IMR-90 (cell line): ENCODE measurements at regions of chr10 and their contacts with region 1.

Region 1: DNA sequence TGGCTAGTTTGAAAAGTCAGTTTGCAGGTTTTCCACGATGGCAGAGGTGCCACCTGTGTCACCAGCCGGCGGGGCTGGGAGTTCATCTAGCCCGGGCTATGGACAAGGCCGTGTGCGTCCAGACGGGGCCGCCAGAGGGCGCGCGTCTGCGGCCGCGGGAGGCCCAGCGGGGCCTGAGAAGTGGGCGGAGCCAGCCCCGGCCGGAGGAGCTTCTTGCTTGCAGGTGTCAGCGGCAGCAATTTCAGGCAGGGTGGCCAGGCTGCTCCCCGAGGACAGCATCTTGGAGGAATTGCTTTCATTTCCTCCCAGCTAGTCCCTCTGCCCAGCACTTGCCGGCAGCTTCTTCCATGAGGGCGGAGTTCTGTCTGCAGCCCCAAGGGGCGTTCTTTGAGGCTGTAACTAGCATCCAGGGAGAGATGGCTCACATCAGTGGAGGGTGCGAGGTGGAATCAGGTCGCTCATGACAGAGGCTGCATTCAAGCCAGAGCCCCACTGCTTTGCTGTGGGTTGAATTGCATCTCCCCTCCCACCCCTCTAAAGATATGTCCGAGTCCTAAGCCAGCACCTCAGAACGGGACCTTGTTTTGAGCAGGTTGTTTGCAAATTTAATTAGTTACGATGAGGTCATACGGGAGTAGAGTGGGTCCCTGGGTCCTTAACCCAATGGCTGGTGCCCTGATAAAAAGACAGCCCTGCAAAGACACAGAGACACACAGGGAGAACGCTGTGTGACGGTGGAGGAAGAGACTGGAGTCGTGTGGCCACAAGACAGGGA is 85.9 kb upstream of the MKI67 start:
- DNase-seq: peak; percentile 41
- ATAC-seq: peak; percentile 95
- H3K4me3 ChIP-seq: no peak overlapping the region
- H3K27ac ChIP-seq: no peak overlapping the region
- H3K4me1 ChIP-seq: no peaks in the 10 kb centered on the region
- H3K27me3 ChIP-seq: no peaks in the 10 kb centered on the region; the same call in 1 of the 2 replicates
- CTCF ChIP-seq: peak; percentile 86
- POLR2A ChIP-seq: no peak
- RAD21 ChIP-seq: peak; percentile 49

Region 2: DNA sequence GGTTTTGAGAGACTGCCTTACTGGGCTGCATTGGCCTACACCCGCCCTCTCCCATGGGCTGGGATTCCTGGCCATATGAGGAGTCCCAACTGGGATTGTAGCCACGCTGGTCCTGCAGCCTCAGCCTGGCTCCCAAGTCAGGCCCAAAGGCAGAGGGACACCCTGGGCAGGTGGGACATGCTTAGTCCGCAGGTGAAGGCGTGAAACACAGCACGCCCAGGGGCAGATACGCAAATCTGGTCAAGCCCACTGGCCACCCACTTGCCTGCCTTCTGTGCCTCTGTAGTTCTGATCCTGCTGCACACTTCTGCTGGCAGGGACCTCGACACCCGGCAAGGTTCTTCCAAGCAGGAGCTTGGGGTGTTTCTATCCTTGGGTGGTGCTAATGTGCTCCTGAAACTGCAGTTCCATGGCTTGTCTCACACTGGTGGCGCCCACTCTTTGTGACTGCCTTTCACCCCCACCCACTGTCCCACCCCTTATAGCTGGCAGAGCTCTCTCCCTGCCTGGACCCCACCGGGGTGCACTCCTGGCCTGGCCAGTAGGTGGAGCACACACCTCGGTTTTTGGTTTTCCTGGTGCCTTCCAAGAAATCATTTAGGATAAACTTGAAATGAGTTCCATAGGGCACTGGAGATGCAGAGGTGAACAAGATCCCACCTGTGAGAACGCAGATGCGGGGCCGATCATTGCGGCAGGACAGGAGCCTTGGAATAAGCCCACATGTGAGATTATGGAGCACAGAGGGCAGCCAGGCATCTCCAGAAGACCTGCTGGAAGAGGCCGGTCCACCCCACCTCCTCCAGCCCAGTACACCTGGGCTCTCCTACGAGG is 133.8 kb before region 1 on chr10:
- CTCF ChIA-PET with region 1: no interaction called
- POLR2A ChIA-PET with region 1: no interaction called
- dilution Hi-C with region 1: no loop called
- in situ Hi-C with region 1: no loop called
- intact Hi-C with region 1: loop called (anchors 1 kb)
- DNase-seq: peak; percentile 37
- ATAC-seq: peak; percentile 98
- H3K4me3 ChIP-seq: no peak overlapping the region
- H3K27ac ChIP-seq: no peak overlapping the region
- H3K4me1 ChIP-seq: no peaks in the 10 kb centered on the region
- H3K27me3 ChIP-seq: peaks cover 8% of the 10 kb centered on the region; the same call in 1 of the 2 replicates
- CTCF ChIP-seq: peak; percentile 86
- POLR2A ChIP-seq: no peak
- RAD21 ChIP-seq: peak; percentile 82

Region 3: GRCh38 chr10:128324077-128324827 is 112.1 kb after region 1 on chr10:
- CTCF ChIA-PET with region 1: no interaction called
- POLR2A ChIA-PET with region 1: no interaction called
- dilution Hi-C with region 1: no loop called
- in situ Hi-C with region 1: no loop called
- intact Hi-C with region 1: no loop called
- DNase-seq: no peak
- ATAC-seq: no peak
- H3K4me3 ChIP-seq: no peak overlapping the region
- H3K27ac ChIP-seq: no peak overlapping the region
- H3K4me1 ChIP-seq: no peaks in the 10 kb centered on the region
- H3K27me3 ChIP-seq: no peaks in the 10 kb centered on the region
- CTCF ChIP-seq: no peak
- POLR2A ChIP-seq: no peak
- RAD21 ChIP-seq: no peak

Region 4: GRCh38 chr10:128629111-128630096 is 417.3 kb after region 1 on chr10:
- CTCF ChIA-PET with region 1: no interaction called
- POLR2A ChIA-PET with region 1: no interaction called
- dilution Hi-C with region 1: no loop called
- in situ Hi-C with region 1: no loop called
- intact Hi-C with region 1: no loop called
- DNase-seq: no peak
- ATAC-seq: no peak
- H3K4me3 ChIP-seq: no peak overlapping the region
- H3K27ac ChIP-seq: no peak overlapping the region
- H3K4me1 ChIP-seq: no peaks in the 10 kb centered on the region
- H3K27me3 ChIP-seq: no peaks in the 10 kb centered on the region
- CTCF ChIP-seq: no peak
- POLR2A ChIP-seq: no peak
- RAD21 ChIP-seq: no peak

Region 5: DNA sequence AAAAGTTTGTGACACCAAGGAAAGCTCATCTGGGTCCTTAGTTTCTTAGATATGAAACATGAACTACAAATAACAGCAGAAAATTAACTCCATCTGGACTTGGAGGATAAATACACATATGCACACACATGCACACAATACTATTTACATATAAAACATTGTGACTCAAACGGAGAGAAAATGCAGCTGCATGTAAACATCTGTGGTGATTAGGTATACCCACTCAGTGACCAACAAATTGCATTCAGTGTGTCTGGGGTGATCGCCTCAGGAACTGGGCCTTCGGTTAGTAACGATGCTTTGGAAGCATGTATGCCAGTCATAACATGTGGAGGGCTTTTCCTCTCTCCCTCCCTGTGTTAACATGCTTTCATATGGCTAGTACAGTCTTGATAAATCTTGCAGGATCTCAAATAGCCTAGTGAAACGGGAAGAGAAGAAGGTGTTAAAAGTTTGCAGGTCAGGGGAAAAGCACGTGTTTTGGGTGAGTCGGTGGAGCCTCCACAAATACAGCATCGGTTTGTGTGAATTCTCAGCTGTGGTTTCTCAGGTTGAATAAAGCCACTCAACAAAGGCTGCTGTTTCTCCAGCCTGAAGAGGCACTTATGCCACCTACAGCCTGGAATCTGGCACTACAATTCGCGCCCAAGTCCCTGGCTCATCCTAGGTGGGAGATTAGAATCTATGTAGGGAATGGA is 1915.4 kb after region 1 on chr10:
- CTCF ChIA-PET with region 1: interaction called, 3 read pairs
- POLR2A ChIA-PET with region 1: no interaction called
- dilution Hi-C with region 1: no loop called
- in situ Hi-C with region 1: no loop called
- intact Hi-C with region 1: loop called (anchors 5 kb)
- DNase-seq: peak; percentile 70
- ATAC-seq: peak; percentile 99; the same call in 1 of the 2 replicates
- H3K4me3 ChIP-seq: no peak overlapping the region
- H3K27ac ChIP-seq: no peak overlapping the region
- H3K4me1 ChIP-seq: peaks cover 2% of the 10 kb centered on the region; the same call in 1 of the 2 replicates
- H3K27me3 ChIP-seq: peaks cover 8% of the 10 kb centered on the region; the same call in 1 of the 2 replicates
- CTCF ChIP-seq: peak; percentile 83
- POLR2A ChIP-seq: no peak
- RAD21 ChIP-seq: peak; percentile 74

Region 6: DNA sequence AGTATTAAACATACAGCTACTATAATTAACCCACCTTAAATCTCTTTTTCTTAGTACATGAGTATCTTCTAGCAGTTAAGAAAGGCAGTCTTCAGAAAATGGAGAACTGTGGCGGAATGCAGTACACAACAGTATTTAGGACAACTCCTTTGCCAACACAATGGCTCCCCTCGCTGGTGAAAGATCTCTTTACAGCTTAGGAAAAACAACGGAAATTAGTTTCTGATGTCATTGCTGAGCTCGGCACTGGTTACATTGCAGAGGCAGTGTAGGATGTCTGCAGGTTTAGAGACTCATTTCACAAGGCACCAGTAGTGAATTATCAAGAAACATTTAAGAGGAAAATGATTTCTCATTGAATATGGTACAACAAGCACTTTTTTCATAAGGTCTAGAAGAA is 1967.5 kb after region 1 on chr10:
- CTCF ChIA-PET with region 1: no interaction called
- POLR2A ChIA-PET with region 1: no interaction called
- dilution Hi-C with region 1: no loop called
- in situ Hi-C with region 1: no loop called
- intact Hi-C with region 1: loop called (anchors 5 kb)
- DNase-seq: peak; percentile 78
- ATAC-seq: peak; percentile 94
- H3K4me3 ChIP-seq: no peak overlapping the region
- H3K27ac ChIP-seq: no peak overlapping the region
- H3K4me1 ChIP-seq: no peaks in the 10 kb centered on the region
- H3K27me3 ChIP-seq: no peaks in the 10 kb centered on the region
- CTCF ChIP-seq: peak; percentile 60
- POLR2A ChIP-seq: no peak
- RAD21 ChIP-seq: peak; percentile 65